Common myeloid progenitor, CD34-positive (primary cell): ENCODE measurements at regions of chr7 and their contacts with region 1.

Region 1: DNA sequence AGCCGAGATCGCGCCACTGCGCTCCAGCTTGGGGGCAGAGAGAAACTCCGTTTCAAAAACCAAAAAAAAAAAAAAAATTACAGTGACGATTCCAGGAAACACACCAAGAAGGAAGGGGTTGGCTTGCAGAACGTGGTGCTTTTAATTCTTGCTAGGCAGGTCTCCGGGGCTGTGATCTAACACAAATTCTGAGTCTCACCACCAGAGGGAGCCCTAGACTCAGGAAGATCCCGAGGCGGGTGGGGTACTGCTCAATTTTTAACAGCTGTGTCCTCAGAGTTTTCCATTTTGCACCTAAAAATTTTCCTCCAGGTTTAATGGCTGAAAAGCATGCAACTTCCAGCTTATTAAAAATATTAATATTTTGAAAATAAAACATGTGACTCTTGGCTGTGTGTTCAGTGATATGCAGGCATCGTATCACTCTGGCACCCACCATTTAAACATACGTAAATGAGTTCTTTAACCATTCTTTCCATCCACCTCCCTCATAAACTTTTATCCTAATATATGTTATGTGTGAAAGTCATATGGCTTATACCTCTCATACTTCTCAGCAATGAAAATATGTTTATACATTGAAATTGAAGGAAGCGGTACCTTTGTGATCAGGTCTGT is 26.5 kb upstream of the NUB1 start:
- DNase-seq: peak; percentile 84 to 93 (median 89)
- H3K4me3 ChIP-seq: peak overlapping the region in 3 of 7 experiments; percentile 45 to 56 (median 48)
- H3K27ac ChIP-seq: no peak overlapping the region
- H3K4me1 ChIP-seq: peaks cover 0 to 25% (median 9%) of the 10 kb centered on the region in 4 experiments
- H3K27me3 ChIP-seq: peaks cover 0 to 1% (median 0%) of the 10 kb centered on the region in 5 experiments

Region 2: GRCh38 chr7:151304856-151305255 is 10.3 kb before region 1 on chr7:
- CTCF ChIA-PET with region 1: interaction called, 52 read pairs
- POLR2A ChIA-PET with region 1: no interaction called
- DNase-seq: peak in 1 of 3 donors; percentile 15
- H3K4me3 ChIP-seq: no peak overlapping the region
- H3K27ac ChIP-seq: no peak overlapping the region
- H3K4me1 ChIP-seq: peaks cover 0 to 27% (median 21%) of the 10 kb centered on the region in 4 experiments
- H3K27me3 ChIP-seq: peaks cover 0 to 27% (median 8%) of the 10 kb centered on the region in 5 experiments

Region 3: DNA sequence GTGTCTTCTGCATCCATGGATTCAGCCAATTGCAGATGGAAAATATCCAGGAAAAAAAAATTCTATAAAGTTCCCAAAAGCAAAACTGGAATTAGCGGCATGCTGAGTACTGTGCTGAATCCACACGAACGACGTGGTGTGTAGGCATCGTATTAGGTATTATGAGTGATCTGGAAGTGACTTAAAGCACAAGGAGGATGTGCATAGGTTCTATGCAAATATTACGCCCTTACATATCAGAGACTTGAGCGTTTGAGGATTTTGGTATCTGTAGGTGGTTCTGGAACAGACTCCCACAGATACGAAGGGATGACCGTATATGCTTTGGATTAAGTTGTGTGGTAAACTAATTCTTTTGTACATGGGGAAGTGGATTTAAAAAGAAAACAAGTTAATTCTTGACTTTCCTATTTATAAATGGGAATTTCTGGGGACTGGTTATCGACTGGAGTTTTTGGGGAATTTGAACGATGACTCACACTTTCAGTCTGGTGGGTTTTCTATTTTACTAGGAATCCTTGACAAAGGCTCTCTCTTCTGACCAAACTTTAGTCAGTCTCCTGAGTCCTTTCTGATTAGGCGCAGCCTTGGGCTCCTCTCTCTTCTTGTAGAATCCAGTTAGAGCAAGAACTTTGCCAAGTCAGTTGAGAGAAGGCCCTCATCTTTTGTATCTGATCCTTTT is 21.0 kb after region 1 on chr7:
- CTCF ChIA-PET with region 1: interaction called, 15 read pairs
- POLR2A ChIA-PET with region 1: no interaction called
- DNase-seq: no peak
- H3K4me3 ChIP-seq: no peak overlapping the region
- H3K27ac ChIP-seq: no peak overlapping the region
- H3K4me1 ChIP-seq: peaks cover 0 to 7% (median 3%) of the 10 kb centered on the region in 4 experiments
- H3K27me3 ChIP-seq: no peaks in the 10 kb centered on the region

Region 4: GRCh38 chr7:151341357-151342101 is 26.4 kb after region 1 on chr7 and contains the start of gene NUB1:
- CTCF ChIA-PET with region 1: interaction called, 155 read pairs
- POLR2A ChIA-PET with region 1: no interaction called
- DNase-seq: peak; percentile 61 to 81 (median 75)
- H3K4me3 ChIP-seq: peak within 1 kb of the TSS; percentile 71 to 100 (median 92)
- H3K27ac ChIP-seq: peak within 1 kb of the TSS; percentile 33 to 84
- H3K4me1 ChIP-seq: peaks cover 10 to 18% (median 11%) of the 10 kb centered on the region in 4 experiments
- H3K27me3 ChIP-seq: no peaks in the 10 kb centered on the region

Region 5: GRCh38 chr7:151351027-151351426 is 35.9 kb after region 1 on chr7:
- CTCF ChIA-PET with region 1: interaction called, 155 read pairs
- POLR2A ChIA-PET with region 1: no interaction called
- DNase-seq: peak; percentile 31 to 38 (median 38)
- H3K4me3 ChIP-seq: no peak overlapping the region
- H3K27ac ChIP-seq: peak overlapping the region in 1 of 2 experiments; percentile 4
- H3K4me1 ChIP-seq: peaks cover 16 to 46% (median 35%) of the 10 kb centered on the region in 4 experiments
- H3K27me3 ChIP-seq: no peaks in the 10 kb centered on the region

Region 6: GRCh38 chr7:151429548-151430331 is 114.6 kb after region 1 on chr7:
- CTCF ChIA-PET with region 1: no interaction called
- POLR2A ChIA-PET with region 1: no interaction called
- DNase-seq: peak in 2 of 3 donors; percentile 72 to 77
- H3K4me3 ChIP-seq: no peak overlapping the region
- H3K27ac ChIP-seq: no peak overlapping the region
- H3K4me1 ChIP-seq: peaks cover 0 to 40% (median 23%) of the 10 kb centered on the region in 4 experiments
- H3K27me3 ChIP-seq: peaks cover 0 to 27% (median 4%) of the 10 kb centered on the region in 5 experiments